ENCODE measurements at regions of chrX and their contacts with region 1.

Region 1: DNA sequence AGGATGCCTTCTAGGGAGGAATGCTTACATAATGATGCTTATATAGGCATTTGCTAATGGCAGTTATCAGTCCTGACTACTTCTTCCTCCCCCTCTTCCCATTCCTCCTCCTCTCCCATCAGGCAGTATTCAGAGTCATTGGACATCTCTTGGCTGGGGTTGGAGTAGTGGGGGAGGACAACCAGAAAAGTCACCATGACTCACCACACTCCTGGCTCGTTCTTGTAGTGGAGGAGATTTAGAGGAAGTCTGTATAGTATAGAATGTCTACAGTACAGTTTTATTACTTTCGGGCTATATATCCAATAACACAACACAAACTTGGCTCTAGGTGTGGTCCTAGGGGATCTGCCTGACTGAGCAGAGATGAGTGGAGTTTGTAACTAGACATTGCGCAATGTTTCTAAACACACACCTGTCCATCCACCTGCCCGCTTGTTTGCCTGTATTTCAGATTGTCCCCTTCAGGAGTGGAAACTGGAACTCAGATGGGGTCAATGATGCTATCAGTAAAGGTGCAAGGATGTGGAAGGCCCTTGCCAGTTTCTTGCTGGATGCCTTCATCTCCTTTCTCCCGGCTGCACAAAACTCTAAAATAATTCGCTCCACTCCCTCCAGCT is 27.9 kb upstream of the KIAA1210 start:
- DNase-seq: no peak
- ATAC-seq: no peak
- H3K4me3 ChIP-seq: no peak overlapping the region
- H3K4me3 Mint-ChIP-seq: no peak overlapping the region
- H3K27ac ChIP-seq: no peak overlapping the region
- H3K27ac Mint-ChIP-seq: no peak overlapping the region
- H3K4me1 ChIP-seq: no peaks in the 10 kb centered on the region
- H3K4me1 Mint-ChIP-seq: no peaks in the 10 kb centered on the region
- H3K27me3 ChIP-seq: no peaks in the 10 kb centered on the region
- H3K27me3 Mint-ChIP-seq: no peaks in the 10 kb centered on the region
- CTCF ChIP-seq: no peak

Region 2: DNA sequence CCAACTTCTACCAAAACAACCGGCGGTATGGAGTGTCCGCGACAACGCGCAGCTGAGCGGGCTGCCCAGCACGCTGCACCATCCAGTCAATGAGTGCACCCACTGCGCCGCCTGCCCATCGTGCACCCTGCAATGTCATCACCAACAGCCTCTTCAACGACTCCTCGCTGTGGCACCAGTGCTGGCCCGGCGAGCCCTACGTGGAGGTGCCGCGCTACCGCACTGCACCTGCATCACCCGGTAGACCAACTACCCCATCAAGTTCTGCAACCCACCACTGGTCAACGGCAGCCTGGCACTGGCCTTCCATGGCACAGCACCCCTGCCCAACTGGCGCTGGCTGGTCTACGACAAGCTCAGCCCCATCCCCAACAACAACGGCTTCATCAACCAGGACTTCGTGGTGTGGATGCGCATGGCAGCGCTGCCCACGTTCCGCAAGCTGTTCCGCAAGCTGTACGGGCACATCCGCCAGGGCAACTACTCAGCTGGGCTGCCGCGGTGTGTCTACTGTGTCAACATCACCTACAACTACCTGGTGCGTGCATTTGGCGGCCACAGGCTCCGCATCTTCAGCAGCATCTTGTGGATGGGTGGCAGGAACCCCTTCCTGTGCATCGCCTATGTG is 385.3 kb before region 1 on chrX:
- CTCF ChIA-PET with region 1: no interaction called
- POLR2A ChIA-PET with region 1: no interaction called
- intact Hi-C with region 1: loop called in 1 of 2 experiments (anchors 5 kb)
- DNase-seq: no peak
- ATAC-seq: no peak
- H3K4me3 ChIP-seq: no peak overlapping the region
- H3K4me3 Mint-ChIP-seq: no peak overlapping the region
- H3K27ac ChIP-seq: no peak overlapping the region
- H3K27ac Mint-ChIP-seq: no peak overlapping the region
- H3K4me1 ChIP-seq: no peaks in the 10 kb centered on the region
- H3K4me1 Mint-ChIP-seq: no peaks in the 10 kb centered on the region
- H3K27me3 ChIP-seq: no peaks in the 10 kb centered on the region
- H3K27me3 Mint-ChIP-seq: peaks cover 4% of the 10 kb centered on the region
- CTCF ChIP-seq: no peak

Region 3: DNA sequence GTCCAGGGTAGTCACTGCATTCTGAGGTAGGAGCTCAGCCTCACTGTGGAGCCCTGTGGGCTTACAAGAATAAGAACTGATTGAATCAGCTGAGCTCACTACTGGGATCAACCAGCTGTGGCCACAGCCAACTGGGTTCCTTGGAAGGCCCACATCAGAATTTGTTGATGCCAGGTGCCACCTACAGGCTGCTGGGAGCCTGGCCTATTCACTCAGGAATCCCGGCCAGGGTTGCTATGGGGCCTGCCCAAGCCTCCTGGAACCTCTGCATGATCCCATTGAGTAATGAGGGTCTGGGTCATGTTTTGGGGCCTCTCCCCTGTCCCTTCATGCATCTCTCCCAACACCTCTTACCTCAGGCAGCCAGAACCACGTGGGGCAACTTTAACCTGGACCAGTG is 26.0 kb after region 1 on chrX:
- CTCF ChIA-PET with region 1: no interaction called
- POLR2A ChIA-PET with region 1: no interaction called
- intact Hi-C with region 1: no loop called
- DNase-seq: no peak
- ATAC-seq: no peak
- H3K4me3 ChIP-seq: no peak overlapping the region
- H3K4me3 Mint-ChIP-seq: no peak overlapping the region
- H3K27ac ChIP-seq: no peak overlapping the region
- H3K27ac Mint-ChIP-seq: no peak overlapping the region
- H3K4me1 ChIP-seq: no peaks in the 10 kb centered on the region
- H3K4me1 Mint-ChIP-seq: no peaks in the 10 kb centered on the region
- H3K27me3 ChIP-seq: no peaks in the 10 kb centered on the region
- H3K27me3 Mint-ChIP-seq: peaks cover 2% of the 10 kb centered on the region
- CTCF ChIP-seq: no peak